ENCODE measurements at regions of chr5 and their contacts with region 1.

Region 1: DNA sequence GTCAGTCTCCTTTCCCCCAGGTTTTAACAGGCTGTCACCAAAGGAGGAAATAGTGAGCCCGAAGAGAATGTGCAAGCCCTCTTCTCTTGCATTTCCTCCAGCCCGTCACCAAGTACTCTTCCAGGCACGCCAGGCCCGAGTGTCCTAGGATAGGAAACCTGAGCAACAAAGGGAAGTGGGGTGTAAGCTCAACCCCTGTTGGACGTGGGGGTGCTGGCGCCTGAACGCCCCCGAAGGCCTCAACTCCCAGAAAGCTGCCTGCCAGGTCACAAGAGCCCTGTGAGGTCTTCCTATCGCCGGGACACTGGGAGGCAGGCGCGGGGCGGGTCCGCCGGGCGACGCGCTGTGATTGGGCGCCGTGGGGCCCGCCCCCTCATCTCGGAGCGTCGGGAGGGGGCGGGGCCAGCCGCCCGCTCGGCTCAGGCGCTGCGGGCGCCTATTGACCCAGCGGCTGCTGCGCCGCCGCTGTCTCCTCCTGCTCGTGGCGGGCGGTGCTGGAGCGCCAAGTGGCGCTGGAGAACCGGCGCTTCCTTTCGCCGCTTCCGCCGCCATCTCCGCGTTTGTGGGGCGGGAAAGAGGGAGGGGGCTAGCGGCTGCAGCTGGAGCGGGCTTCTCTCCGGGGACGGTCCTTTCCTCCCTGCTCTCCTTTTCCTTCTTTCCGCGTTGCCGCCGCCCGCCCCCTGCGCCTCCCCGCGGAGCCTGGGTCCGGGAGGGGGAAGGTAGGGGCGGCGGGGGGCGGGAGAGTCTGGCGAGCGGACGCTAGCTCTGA is 572 bp upstream of the MAN2A1 start:
- DNase-seq: peak; percentile 83
- ATAC-seq: peak; percentile 82
- H3K4me3 Mint-ChIP-seq: peak overlapping the region; percentile 88
- H3K27ac Mint-ChIP-seq: peak overlapping the region; percentile 96
- H3K4me1 Mint-ChIP-seq: peaks cover 37% of the 10 kb centered on the region
- H3K27me3 Mint-ChIP-seq: peaks cover 4% of the 10 kb centered on the region
- CTCF ChIP-seq: no peak

Region 2: DNA sequence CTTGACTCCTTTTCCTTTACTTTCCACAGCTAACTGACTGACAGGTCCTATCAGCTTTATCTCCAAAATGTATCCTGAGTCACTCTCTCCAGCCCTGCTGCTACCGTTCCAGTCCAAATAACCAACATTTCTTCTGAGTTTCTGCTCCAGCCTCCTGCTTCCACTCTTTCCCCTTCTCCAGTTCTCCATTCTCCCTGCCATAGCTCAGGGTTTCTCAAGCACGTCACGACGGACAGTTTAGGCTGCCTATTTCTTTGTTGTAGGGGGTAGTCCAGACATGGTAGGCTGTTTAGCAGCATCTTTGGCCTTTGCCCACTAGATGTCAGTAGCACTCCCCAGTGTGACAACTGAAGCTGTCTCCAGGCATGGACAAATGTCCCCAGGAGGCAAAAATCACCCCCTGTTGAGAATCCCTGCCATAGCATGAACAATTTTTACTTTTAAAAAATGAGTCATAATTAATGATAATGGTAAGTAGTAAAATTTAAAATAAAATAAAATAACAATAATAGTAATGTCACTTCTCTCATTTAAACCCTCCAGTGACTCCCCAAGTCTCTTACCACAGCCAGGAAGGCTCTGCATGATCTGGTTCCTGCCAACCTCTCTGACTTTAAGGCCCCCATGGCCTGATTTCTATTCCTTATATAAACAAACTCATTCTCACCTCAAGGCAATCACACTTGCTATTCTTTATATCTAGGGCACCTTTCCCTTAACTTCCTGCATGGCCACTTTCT is 1046.8 kb before region 1 on chr5:
- CTCF ChIA-PET with region 1: interaction called, 4 read pairs
- POLR2A ChIA-PET with region 1: no interaction called
- intact Hi-C with region 1: loop called (anchors 2 kb)
- DNase-seq: peak; percentile 20
- ATAC-seq: peak; percentile 77
- H3K4me3 Mint-ChIP-seq: no peak overlapping the region
- H3K27ac Mint-ChIP-seq: no peak overlapping the region
- H3K4me1 Mint-ChIP-seq: peaks cover 2% of the 10 kb centered on the region
- H3K27me3 Mint-ChIP-seq: peaks cover 5% of the 10 kb centered on the region
- CTCF ChIP-seq: peak; percentile 70

Region 3: GRCh38 chr5:108748401-108749127 is 940.6 kb before region 1 on chr5:
- CTCF ChIA-PET with region 1: no interaction called
- POLR2A ChIA-PET with region 1: interaction called, 6 read pairs
- intact Hi-C with region 1: loop called (anchors 2 kb)
- DNase-seq: peak; percentile 92
- ATAC-seq: peak; percentile 92
- H3K4me3 Mint-ChIP-seq: peak overlapping the region; percentile 92
- H3K27ac Mint-ChIP-seq: peak overlapping the region; percentile 94
- H3K4me1 Mint-ChIP-seq: peaks cover 22% of the 10 kb centered on the region
- H3K27me3 Mint-ChIP-seq: no peaks in the 10 kb centered on the region
- CTCF ChIP-seq: no peak

Region 4: GRCh38 chr5:109409844-109410388 is 279.2 kb before region 1 on chr5 and contains the start of gene PJA2:
- CTCF ChIA-PET with region 1: interaction called, 3 read pairs
- POLR2A ChIA-PET with region 1: interaction called, 25 read pairs
- intact Hi-C with region 1: loop called (anchors 1 kb)
- DNase-seq: peak; percentile 96
- ATAC-seq: peak; percentile 86
- H3K4me3 Mint-ChIP-seq: peak within 1 kb of the TSS; percentile 99
- H3K27ac Mint-ChIP-seq: peak within 1 kb of the TSS; percentile 94
- H3K4me1 Mint-ChIP-seq: peaks cover 49% of the 10 kb centered on the region
- H3K27me3 Mint-ChIP-seq: no peaks in the 10 kb centered on the region
- CTCF ChIP-seq: no peak
- total RNA-seq, gene PJA2: 55.3 and 58.0 TPM in 2 replicates

Region 5: GRCh38 chr5:109739741-109740728 is 50.9 kb after region 1 on chr5:
- CTCF ChIA-PET with region 1: no interaction called
- POLR2A ChIA-PET with region 1: interaction called, 7 read pairs
- intact Hi-C with region 1: loop called (anchors 10 kb)
- DNase-seq: no peak
- ATAC-seq: peak; percentile 50
- H3K4me3 Mint-ChIP-seq: no peak overlapping the region
- H3K27ac Mint-ChIP-seq: no peak overlapping the region
- H3K4me1 Mint-ChIP-seq: peaks cover 30% of the 10 kb centered on the region
- H3K27me3 Mint-ChIP-seq: no peaks in the 10 kb centered on the region
- CTCF ChIP-seq: no peak

Region 6: DNA sequence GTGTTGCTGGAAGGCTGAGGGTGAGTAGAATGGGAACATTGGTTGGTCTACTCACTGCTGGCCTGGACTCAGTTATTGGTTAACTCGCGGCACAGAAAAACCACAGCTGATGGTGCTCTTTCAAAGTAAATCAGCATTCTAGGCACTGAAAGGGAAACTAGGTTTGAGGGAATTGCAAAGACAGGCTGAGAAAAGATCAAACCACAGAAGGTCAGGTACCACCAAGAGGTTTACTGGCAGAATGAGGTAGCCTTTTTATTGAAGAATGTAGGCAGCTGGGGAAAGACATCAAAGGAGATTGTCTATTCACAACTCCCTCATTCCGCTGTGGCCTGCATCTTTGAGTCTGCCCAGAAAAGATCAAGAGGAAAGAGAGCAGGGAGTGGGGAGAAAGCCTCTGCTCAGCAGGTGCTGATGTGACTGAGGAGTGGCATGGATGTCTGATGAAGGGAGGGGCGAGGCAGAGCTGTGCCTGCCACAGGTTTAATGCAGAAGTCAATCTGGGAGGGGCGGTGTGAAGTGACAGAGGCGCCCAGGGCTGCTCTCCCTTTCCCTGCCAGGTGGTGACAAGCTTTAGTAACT is 256.0 kb after region 1 on chr5:
- CTCF ChIA-PET with region 1: no interaction called
- POLR2A ChIA-PET with region 1: no interaction called
- intact Hi-C with region 1: no loop called
- DNase-seq: no peak
- ATAC-seq: no peak
- H3K4me3 Mint-ChIP-seq: no peak overlapping the region
- H3K27ac Mint-ChIP-seq: no peak overlapping the region
- H3K4me1 Mint-ChIP-seq: no peaks in the 10 kb centered on the region
- H3K27me3 Mint-ChIP-seq: peaks cover 13% of the 10 kb centered on the region
- CTCF ChIP-seq: no peak

Region 7: DNA sequence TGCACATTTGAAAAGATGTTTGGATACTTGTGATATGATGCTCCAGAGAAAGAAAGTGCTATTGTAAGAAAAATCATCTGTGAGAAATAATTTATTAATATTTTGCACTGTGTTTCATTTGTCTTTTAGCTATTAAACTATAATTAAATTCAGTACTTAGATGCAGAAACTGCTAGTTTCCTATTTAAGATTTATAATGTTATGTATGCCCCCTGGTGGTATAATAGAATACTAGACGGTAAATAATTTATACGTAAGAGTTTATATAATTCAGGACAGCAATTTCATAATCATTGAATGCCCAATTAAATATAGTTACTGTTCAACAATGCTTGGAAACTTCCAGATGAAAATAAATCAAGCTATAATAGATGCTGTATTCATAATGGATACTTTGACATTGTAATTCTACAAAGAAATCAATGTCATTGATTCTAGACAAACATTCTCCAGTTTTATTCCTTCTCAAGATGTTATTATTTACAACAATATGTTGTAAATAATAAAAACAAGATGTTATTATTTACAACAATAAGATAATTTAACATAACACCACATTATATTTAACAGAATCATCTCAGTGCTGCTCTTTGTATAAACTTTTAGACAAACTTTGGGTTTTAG is 936.3 kb after region 1 on chr5:
- CTCF ChIA-PET with region 1: interaction called, 3 read pairs
- POLR2A ChIA-PET with region 1: no interaction called
- intact Hi-C with region 1: loop called (anchors 5 kb)
- DNase-seq: no peak
- ATAC-seq: no peak
- H3K4me3 Mint-ChIP-seq: no peak overlapping the region
- H3K27ac Mint-ChIP-seq: no peak overlapping the region
- H3K4me1 Mint-ChIP-seq: no peaks in the 10 kb centered on the region
- H3K27me3 Mint-ChIP-seq: no peaks in the 10 kb centered on the region
- CTCF ChIP-seq: peak; percentile 77

Region 8: GRCh38 chr5:110790673-110791072 is 1101.5 kb after region 1 on chr5:
- CTCF ChIA-PET with region 1: no interaction called
- POLR2A ChIA-PET with region 1: no interaction called
- intact Hi-C with region 1: no loop called
- DNase-seq: no peak
- ATAC-seq: no peak
- H3K4me3 Mint-ChIP-seq: no peak overlapping the region
- H3K27ac Mint-ChIP-seq: no peak overlapping the region
- H3K4me1 Mint-ChIP-seq: no peaks in the 10 kb centered on the region
- H3K27me3 Mint-ChIP-seq: no peaks in the 10 kb centered on the region
- CTCF ChIP-seq: no peak

Region 9: DNA sequence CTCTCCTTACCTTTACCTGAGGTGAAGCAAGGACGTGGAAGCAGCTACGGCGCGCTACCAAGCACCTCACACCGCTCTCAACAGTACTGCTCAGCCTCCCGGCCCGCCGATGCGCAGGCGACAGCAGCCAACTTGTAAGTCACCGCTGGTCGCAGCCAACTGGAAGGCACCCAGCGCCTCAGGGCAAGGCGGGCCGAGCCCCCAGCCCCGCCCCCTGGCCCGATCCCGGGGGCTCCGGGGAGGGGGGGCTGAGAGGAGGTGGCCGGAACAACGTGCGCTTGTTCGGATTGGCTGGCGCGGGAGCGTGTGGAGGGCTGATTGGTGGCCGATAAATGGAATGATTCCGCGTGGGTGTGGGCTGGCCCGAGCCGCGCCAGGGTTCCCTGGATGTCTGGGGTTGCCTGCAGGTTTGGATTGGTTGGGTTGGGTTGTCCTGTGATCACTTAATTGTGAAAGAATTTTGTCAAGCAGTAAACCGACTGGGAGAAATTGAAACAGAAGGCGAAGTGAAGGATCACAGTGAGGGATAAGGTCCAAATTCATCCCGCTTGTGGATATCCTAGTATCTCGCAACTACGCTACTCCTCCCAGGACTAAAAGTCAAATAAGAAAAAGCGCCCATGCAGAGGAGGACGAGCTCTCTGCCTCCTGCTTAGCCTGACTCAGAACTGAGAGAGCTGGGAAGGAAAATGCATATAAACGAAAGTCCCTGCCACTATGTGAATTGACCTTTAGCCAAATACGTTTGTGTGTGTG is 1823.4 kb after region 1 on chr5 and contains the start of gene STARD4:
- CTCF ChIA-PET with region 1: no interaction called
- POLR2A ChIA-PET with region 1: no interaction called
- intact Hi-C with region 1: loop called (anchors 5 kb)
- DNase-seq: peak; percentile 94
- ATAC-seq: peak; percentile 96
- H3K4me3 Mint-ChIP-seq: peak within 1 kb of the TSS; percentile 99
- H3K27ac Mint-ChIP-seq: peak within 1 kb of the TSS; percentile 99
- H3K4me1 Mint-ChIP-seq: peaks cover 35% of the 10 kb centered on the region
- H3K27me3 Mint-ChIP-seq: no peaks in the 10 kb centered on the region
- CTCF ChIP-seq: no peak
- total RNA-seq, gene STARD4: 32.2 and 40.3 TPM in 2 replicates

Measured in activated B cell treated with CpG ODN at 0.5 μM for 24 hours (primary cell).